ENCODE measurements at regions of chr14 and their contacts with region 1.

Region 1: GRCh38 chr14:22579236-22579635 is 9.8 kb downstream of the DAD1 start:
- DNase-seq: no peak
- ATAC-seq: no peak
- H3K4me3 ChIP-seq: no peak overlapping the region
- H3K27ac ChIP-seq: no peak overlapping the region
- H3K4me1 ChIP-seq: peaks cover 2% of the 10 kb centered on the region; the same call in 1 of the 2 replicates
- H3K27me3 ChIP-seq: no peaks in the 10 kb centered on the region
- CTCF ChIP-seq: no peak
- POLR2A ChIP-seq: no peak
- RAD21 ChIP-seq: no peak

Region 2: GRCh38 chr14:22556990-22557623 is 22.1 kb before region 1 on chr14:
- CTCF ChIA-PET with region 1: no interaction called
- POLR2A ChIA-PET with region 1: no interaction called
- dilution Hi-C with region 1: no loop called
- in situ Hi-C with region 1: no loop called
- intact Hi-C with region 1: no loop called
- DNase-seq: peak; percentile 64
- ATAC-seq: peak; percentile 94
- H3K4me3 ChIP-seq: peak overlapping the region; percentile 36
- H3K27ac ChIP-seq: peak overlapping the region; percentile 86
- H3K4me1 ChIP-seq: peaks cover 13% of the 10 kb centered on the region
- H3K27me3 ChIP-seq: no peaks in the 10 kb centered on the region
- CTCF ChIP-seq: peak; percentile 79
- POLR2A ChIP-seq: no peak
- RAD21 ChIP-seq: peak; percentile 79

Region 3: DNA sequence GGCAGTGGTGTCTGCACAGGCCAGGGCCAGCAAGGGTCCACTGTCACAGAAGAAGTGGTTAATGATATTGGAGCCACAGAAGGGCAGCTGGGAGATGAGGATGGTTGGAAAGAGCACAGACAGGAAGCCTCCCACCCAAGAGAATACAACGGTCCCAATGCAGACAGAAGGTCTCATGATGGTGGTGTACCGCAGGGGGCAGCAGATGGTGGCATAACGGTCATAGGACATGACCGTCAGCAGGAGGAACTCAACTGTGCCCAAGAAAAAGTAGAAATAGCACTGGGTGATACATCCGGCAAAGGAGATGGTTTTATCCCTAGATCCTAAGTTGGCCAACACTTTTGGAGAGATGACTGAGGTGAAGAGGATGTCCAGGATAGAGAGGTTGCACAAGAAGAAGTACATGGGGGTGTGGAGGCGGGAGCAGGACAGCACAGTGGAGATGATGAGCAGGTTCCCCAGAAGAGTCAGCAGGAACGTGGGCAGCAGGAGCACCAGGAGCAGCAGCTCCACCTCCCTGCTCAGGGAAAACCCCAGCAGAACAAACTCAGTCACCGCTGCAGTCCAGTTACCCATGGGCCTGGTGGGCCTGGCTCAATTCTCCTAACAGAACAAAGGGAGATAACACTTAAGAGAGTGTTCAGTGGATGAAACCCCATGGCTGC is 55.1 kb after region 1 on chr14:
- CTCF ChIA-PET with region 1: no interaction called
- POLR2A ChIA-PET with region 1: interaction called, 12 read pairs
- dilution Hi-C with region 1: no loop called
- in situ Hi-C with region 1: no loop called
- intact Hi-C with region 1: no loop called
- DNase-seq: no peak
- ATAC-seq: no peak
- H3K4me3 ChIP-seq: no peak overlapping the region
- H3K27ac ChIP-seq: no peak overlapping the region
- H3K4me1 ChIP-seq: peaks cover 4% of the 10 kb centered on the region; the same call in 1 of the 2 replicates
- H3K27me3 ChIP-seq: peaks cover 12% of the 10 kb centered on the region
- CTCF ChIP-seq: no peak
- POLR2A ChIP-seq: no peak
- RAD21 ChIP-seq: no peak

Region 4: GRCh38 chr14:22653012-22653621 is 73.9 kb after region 1 on chr14:
- CTCF ChIA-PET with region 1: no interaction called
- POLR2A ChIA-PET with region 1: no interaction called
- dilution Hi-C with region 1: no loop called
- in situ Hi-C with region 1: loop called (anchors 5 kb)
- intact Hi-C with region 1: no loop called
- DNase-seq: peak; percentile 74
- ATAC-seq: peak; percentile 97
- H3K4me3 ChIP-seq: no peak overlapping the region
- H3K27ac ChIP-seq: no peak overlapping the region
- H3K4me1 ChIP-seq: no peaks in the 10 kb centered on the region
- H3K27me3 ChIP-seq: 0 out of 2 replicates have a peak, but pooled peaks cover 1% of the 10 kb centered on the region
- CTCF ChIP-seq: peak; percentile 95
- POLR2A ChIP-seq: 0 out of 2 replicates have a peak, but pooled peaks have one; percentile 23
- RAD21 ChIP-seq: peak; percentile 93

Measured in IMR-90 (cell line).